Heart right ventricle (tissue), 16 donors: ENCODE measurements at regions of chr13 and their contacts with region 1.

Region 1: GRCh38 chr13:25253687-25254086 is 33.6 kb downstream of the MTMR6 start:
- DNase-seq: no peak
- ATAC-seq: no peak
- H3K4me3 ChIP-seq: no peak overlapping the region
- H3K27ac ChIP-seq: no peak overlapping the region
- H3K4me1 ChIP-seq: peaks cover 0 to 3% (median 0%) of the 10 kb centered on the region in 9 donors
- H3K27me3 ChIP-seq: no peaks in the 10 kb centered on the region
- CTCF ChIP-seq: no peak

Region 2: DNA sequence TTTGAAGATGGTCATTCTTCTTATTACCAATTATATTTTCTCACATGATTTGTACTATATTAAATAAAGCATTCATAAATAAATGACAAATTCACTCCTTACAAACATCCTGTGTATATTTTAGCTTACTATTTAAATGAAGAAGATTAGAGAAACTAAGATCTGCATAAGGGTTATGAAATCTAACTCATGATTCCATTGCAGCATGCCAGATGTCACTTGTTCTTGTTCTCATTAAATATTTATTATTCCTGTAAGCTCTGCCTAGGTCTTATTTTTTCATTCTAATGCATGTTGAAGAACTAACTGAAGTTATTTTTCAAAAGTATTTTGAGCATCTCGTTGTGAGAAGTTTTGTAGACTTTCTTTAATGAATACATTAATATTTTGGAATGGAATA is 66.1 kb after region 1 on chr13:
- intact Hi-C with region 1: loop called in 2 of 10 experiments (anchors 5 to 10 kb)
- DNase-seq: no peak
- ATAC-seq: no peak
- H3K4me3 ChIP-seq: no peak overlapping the region
- H3K27ac ChIP-seq: peak overlapping the region in 1 of 10 donors; percentile 13
- H3K4me1 ChIP-seq: peaks cover 0 to 4% (median 0%) of the 10 kb centered on the region in 9 donors
- H3K27me3 ChIP-seq: no peaks in the 10 kb centered on the region
- CTCF ChIP-seq: no peak

Region 3: DNA sequence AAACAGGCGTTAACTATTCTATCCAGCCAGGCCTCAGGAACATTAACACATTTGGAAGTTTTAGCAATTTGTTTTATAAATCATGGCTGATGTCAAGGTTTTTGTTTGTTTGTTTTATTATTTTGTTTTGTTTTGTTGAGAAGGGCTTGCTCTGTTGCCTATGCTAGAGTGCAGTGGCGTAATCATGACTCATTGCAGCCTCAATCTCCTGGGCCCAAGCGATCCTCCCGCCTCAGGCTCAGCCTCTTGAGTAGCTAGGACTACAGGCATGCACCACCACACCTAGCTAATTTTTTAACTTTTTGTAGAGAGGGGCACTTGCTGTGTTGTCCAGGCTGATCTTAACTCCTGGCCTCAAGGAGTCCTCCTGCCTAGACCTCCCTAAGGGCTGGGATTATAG is 76.0 kb after region 1 on chr13:
- intact Hi-C with region 1: loop called in 3 of 10 experiments (anchors 5 to 10 kb)
- DNase-seq: no peak
- ATAC-seq: no peak
- H3K4me3 ChIP-seq: no peak overlapping the region
- H3K27ac ChIP-seq: no peak overlapping the region
- H3K4me1 ChIP-seq: no peaks in the 10 kb centered on the region
- H3K27me3 ChIP-seq: no peaks in the 10 kb centered on the region
- CTCF ChIP-seq: no peak